Activated CD8-positive, alpha-beta T cell treated with anti-CD3 and anti-CD28 coated beads for 36 hours (primary cell): ENCODE measurements at regions of chr3 and their contacts with region 1.

Region 1: GRCh38 chr3:25648107-25648535 is 16.6 kb downstream of the TOP2B start:
- DNase-seq: peak; percentile 92
- ATAC-seq: peak; percentile 99
- H3K4me3 Mint-ChIP-seq: no peak overlapping the region
- H3K27ac Mint-ChIP-seq: peak overlapping the region; percentile 14
- H3K4me1 Mint-ChIP-seq: peaks cover 49% of the 10 kb centered on the region
- H3K27me3 Mint-ChIP-seq: no peaks in the 10 kb centered on the region
- CTCF ChIP-seq: peak; percentile 95

Region 2: GRCh38 chr3:25664810-25665314 is 16.7 kb after region 1 on chr3 and contains the start of gene TOP2B:
- CTCF ChIA-PET with region 1: interaction called, 37 read pairs
- POLR2A ChIA-PET with region 1: interaction called, 3 read pairs
- intact Hi-C with region 1: no loop called
- DNase-seq: peak; percentile 96
- ATAC-seq: peak; percentile 86
- H3K4me3 Mint-ChIP-seq: peak within 1 kb of the TSS; percentile 96
- H3K27ac Mint-ChIP-seq: peak within 1 kb of the TSS; percentile 99
- H3K4me1 Mint-ChIP-seq: peaks cover 44% of the 10 kb centered on the region
- H3K27me3 Mint-ChIP-seq: no peaks in the 10 kb centered on the region
- CTCF ChIP-seq: no peak
- total RNA-seq, gene TOP2B: 165 to 171 TPM

Region 3: GRCh38 chr3:25782938-25783660 is 135.0 kb after region 1 on chr3 and contains the start of gene NGLY1:
- CTCF ChIA-PET with region 1: interaction called, 12 read pairs
- POLR2A ChIA-PET with region 1: interaction called, 7 read pairs
- intact Hi-C with region 1: no loop called
- DNase-seq: peak; percentile 87
- ATAC-seq: peak; percentile 91
- H3K4me3 Mint-ChIP-seq: peak within 1 kb of the TSS; percentile 91
- H3K27ac Mint-ChIP-seq: peak within 1 kb of the TSS; percentile 88
- H3K4me1 Mint-ChIP-seq: peaks cover 56% of the 10 kb centered on the region
- H3K27me3 Mint-ChIP-seq: no peaks in the 10 kb centered on the region
- CTCF ChIP-seq: no peak
- total RNA-seq, gene NGLY1: 142 to 146 TPM

Region 4: DNA sequence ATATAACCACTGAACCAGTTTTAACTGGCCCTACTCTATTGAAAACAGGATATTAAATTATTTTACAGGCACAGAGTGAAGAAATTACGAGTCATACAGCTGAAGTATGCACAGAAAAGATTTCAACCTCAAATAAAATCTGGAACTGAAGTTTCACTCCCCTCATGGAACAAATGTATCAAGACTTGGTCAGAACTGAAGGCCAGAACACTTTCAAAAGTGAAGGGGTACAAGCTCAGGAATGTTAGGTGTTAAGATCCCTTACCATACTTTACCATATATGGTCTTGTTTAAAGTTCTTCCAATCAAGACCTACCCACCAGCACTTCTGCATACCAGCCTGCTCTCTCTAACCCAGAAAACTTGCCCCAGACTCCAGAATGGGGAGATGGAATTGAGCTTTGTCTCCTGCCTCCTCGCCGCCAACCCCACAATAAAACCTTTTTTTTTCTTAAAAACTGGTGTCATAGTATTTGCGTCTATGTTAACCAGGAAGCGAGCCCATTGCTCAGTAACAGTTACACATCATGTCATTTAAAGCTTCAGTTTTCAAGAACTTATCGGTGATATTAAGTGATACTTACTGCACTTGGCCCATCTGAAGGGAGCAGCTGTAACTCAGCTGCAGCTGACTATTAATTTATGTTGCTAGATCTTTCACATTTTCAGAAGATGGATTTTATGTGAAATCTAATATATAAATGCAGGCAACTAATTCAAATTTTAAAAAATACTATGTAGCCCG is 201.7 kb after region 1 on chr3:
- CTCF ChIA-PET with region 1: interaction called, 94 read pairs
- POLR2A ChIA-PET with region 1: interaction called, 4 read pairs
- intact Hi-C with region 1: no loop called
- DNase-seq: no peak
- ATAC-seq: peak; percentile 82
- H3K4me3 Mint-ChIP-seq: no peak overlapping the region
- H3K27ac Mint-ChIP-seq: peak overlapping the region; percentile 55
- H3K4me1 Mint-ChIP-seq: peaks cover 12% of the 10 kb centered on the region
- H3K27me3 Mint-ChIP-seq: peaks cover 5% of the 10 kb centered on the region
- CTCF ChIP-seq: no peak

Region 5: GRCh38 chr3:25863416-25863959 is 215.4 kb after region 1 on chr3:
- CTCF ChIA-PET with region 1: interaction called, 94 read pairs
- POLR2A ChIA-PET with region 1: no interaction called
- intact Hi-C with region 1: no loop called
- DNase-seq: no peak
- ATAC-seq: no peak
- H3K4me3 Mint-ChIP-seq: no peak overlapping the region
- H3K27ac Mint-ChIP-seq: no peak overlapping the region
- H3K4me1 Mint-ChIP-seq: no peaks in the 10 kb centered on the region
- H3K27me3 Mint-ChIP-seq: no peaks in the 10 kb centered on the region
- CTCF ChIP-seq: no peak